MCF 10A (cell line): ENCODE measurements at regions of chr4 and their contacts with region 1.

Region 1: GRCh38 chr4:18366892-18367291 is 345.3 kb upstream of the LCORL start:
- DNase-seq: peak; percentile 51
- H3K4me3 Mint-ChIP-seq: no peak overlapping the region
- H3K27ac Mint-ChIP-seq: no peak overlapping the region
- H3K4me1 Mint-ChIP-seq: peaks cover 6% of the 10 kb centered on the region
- H3K27me3 Mint-ChIP-seq: no peaks in the 10 kb centered on the region
- CTCF ChIP-seq: peak; percentile 62

Region 2: GRCh38 chr4:17817020-17817419 is 549.9 kb before region 1 on chr4:
- CTCF ChIA-PET with region 1: interaction called, 60 read pairs
- POLR2A ChIA-PET with region 1: interaction called, 6 read pairs
- intact Hi-C with region 1: loop called (anchors 1 kb)
- DNase-seq: peak; percentile 56
- H3K4me3 Mint-ChIP-seq: peak overlapping the region; percentile 24
- H3K27ac Mint-ChIP-seq: no peak overlapping the region
- H3K4me1 Mint-ChIP-seq: peaks cover 13% of the 10 kb centered on the region
- H3K27me3 Mint-ChIP-seq: no peaks in the 10 kb centered on the region
- CTCF ChIP-seq: peak; percentile 52

Region 3: DNA sequence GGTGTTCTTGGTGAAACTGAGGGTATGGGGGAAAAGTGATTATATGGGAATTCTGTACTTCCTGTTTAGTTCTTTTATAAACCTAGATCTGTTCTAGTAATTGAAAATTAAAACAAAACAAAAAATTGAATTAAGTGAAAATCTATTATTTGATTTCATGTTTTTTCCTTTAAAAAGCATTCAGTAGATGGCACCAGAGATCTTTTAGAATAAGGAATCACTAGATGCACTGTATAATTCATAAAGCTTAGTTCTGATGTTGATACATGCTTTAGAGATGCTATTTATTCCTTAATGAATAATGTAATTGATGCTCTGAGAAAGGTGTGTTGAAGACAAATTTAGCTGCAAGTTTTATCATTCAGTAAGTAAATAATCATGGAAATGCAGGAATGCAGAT is 432.6 kb before region 1 on chr4:
- CTCF ChIA-PET with region 1: interaction called, 3 read pairs
- POLR2A ChIA-PET with region 1: no interaction called
- intact Hi-C with region 1: loop called (anchors 1 kb)
- DNase-seq: no peak
- H3K4me3 Mint-ChIP-seq: no peak overlapping the region
- H3K27ac Mint-ChIP-seq: no peak overlapping the region
- H3K4me1 Mint-ChIP-seq: peaks cover 15% of the 10 kb centered on the region
- H3K27me3 Mint-ChIP-seq: no peaks in the 10 kb centered on the region
- CTCF ChIP-seq: no peak

Region 4: DNA sequence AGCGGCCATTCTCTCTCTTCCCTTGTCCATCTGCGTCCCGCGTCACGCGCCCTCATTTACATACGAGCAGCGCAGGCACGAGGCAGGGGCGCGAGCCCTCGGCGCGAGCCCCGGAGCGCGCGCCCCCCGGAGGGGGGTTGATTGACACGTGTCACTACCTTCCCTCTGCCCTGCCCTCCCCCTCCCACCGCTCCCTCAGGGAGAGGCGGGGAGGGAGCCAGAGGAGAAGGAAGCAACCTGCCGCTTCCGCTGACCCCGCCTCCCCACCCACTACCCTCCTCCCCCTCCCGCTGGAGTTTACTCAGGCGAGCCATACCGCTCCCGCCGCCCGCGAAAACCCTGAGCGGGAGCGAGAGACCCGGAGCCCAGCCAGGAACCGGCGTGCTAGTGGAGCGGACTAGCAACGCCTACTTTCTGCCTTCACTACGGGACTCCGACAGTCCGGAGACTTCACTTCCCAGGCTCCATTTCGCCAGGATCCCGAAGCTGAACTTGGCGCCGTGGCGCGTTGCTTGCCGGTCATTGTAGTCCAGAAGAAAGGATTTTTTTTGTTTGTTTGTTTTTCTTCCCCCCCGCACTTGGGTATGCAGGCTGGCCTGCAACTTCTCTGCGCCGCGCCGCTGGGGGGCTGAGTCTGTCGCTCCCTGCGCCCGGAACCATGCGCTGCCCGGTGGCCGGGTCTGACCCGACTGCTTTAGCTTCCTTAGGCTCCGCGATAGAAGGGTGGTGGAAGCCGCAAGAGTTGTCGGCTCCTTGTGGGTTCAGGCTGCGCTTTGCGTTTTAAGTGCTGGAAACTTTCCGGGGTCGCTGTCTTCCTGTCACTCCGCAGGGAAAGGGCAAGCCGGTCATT is 344.9 kb before region 1 on chr4 and contains the start of gene LCORL:
- CTCF ChIA-PET with region 1: interaction called, 5 read pairs
- POLR2A ChIA-PET with region 1: no interaction called
- intact Hi-C with region 1: loop called (anchors 2 kb)
- DNase-seq: peak; percentile 97
- H3K4me3 Mint-ChIP-seq: peak within 1 kb of the TSS; percentile 98
- H3K27ac Mint-ChIP-seq: peak within 1 kb of the TSS; percentile 84
- H3K4me1 Mint-ChIP-seq: peaks cover 14% of the 10 kb centered on the region
- H3K27me3 Mint-ChIP-seq: no peaks in the 10 kb centered on the region
- CTCF ChIP-seq: no peak
- total RNA-seq, gene LCORL: 10.7 and 14.1 TPM in 2 replicates